Lower lobe of right lung (tissue), 2 donors: ENCODE measurements at regions of chr12 and their contacts with region 1.

Region 1: GRCh38 chr12:111396726-111397445 is 8.8 kb upstream of the SH2B3 start:
- DNase-seq: peak; percentile 92
- ATAC-seq: peak; percentile 85 to 93
- H3K4me3 ChIP-seq: peak overlapping the region; percentile 42
- H3K27ac ChIP-seq: peak overlapping the region; percentile 54
- H3K4me1 ChIP-seq: peaks cover 30% of the 10 kb centered on the region
- H3K27me3 ChIP-seq: no peaks in the 10 kb centered on the region
- CTCF ChIP-seq: peak; percentile 99

Region 2: GRCh38 chr12:111434680-111435338 is 37.9 kb after region 1 on chr12:
- intact Hi-C with region 1: no loop called
- DNase-seq: no peak
- ATAC-seq: peak; percentile 43 to 54
- H3K4me3 ChIP-seq: no peak overlapping the region
- H3K27ac ChIP-seq: peak overlapping the region; percentile 81
- H3K4me1 ChIP-seq: peaks cover 100% of the 10 kb centered on the region
- H3K27me3 ChIP-seq: no peaks in the 10 kb centered on the region
- CTCF ChIP-seq: no peak

Region 3: GRCh38 chr12:111451649-111452129 is 54.8 kb after region 1 on chr12:
- intact Hi-C with region 1: loop called (anchors 10 kb)
- DNase-seq: no peak
- ATAC-seq: peak; percentile 33 to 34
- H3K4me3 ChIP-seq: no peak overlapping the region
- H3K27ac ChIP-seq: no peak overlapping the region
- H3K4me1 ChIP-seq: peaks cover 34% of the 10 kb centered on the region
- H3K27me3 ChIP-seq: no peaks in the 10 kb centered on the region
- CTCF ChIP-seq: peak; percentile 79

Region 4: DNA sequence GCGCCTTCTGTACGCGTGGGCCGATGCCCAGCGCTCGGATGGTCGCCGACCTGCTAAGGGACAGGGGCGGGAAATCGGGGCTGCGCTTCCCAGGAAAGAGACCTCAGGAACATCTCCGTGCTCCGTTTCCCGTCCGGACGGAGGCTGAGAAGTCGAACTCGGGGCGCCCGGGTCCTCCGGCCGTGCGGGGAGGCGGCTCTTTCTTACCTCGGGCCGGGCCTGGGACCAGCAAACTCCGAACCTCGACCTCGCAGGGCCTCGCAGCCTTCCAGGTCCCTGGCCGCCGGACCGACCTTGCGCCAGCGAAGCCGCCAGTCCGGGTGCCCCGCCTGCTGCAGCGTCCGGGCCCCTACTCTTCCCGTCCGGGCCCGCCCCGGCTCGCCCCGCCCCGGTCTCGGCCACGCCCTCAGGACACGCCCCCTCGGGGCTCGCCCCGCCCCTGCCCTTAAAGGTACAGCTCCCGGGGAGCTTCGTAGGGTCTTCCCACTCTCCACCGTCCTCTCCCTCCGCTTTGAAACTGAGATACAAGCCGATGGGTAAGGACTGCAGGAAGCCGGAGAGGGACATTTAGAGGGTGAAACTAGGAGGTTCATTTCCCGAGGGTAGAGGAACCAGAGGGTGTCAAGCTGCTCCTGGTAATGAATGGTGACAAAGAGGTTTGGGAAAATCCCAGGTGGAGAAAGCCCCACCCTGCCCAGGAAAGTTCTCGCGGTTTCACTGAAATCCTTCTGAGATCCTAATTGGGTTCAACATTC is 1938.1 kb after region 1 on chr12 and contains the start of gene SLC8B1:
- intact Hi-C with region 1: no loop called
- DNase-seq: peak; percentile 93
- ATAC-seq: peak; percentile 99 to 100
- H3K4me3 ChIP-seq: peak within 1 kb of the TSS; percentile 93
- H3K27ac ChIP-seq: peak within 1 kb of the TSS; percentile 82
- H3K4me1 ChIP-seq: peaks cover 18% of the 10 kb centered on the region
- H3K27me3 ChIP-seq: no peaks in the 10 kb centered on the region
- CTCF ChIP-seq: no peak
- total RNA-seq, gene SLC8B1: 39.3 TPM